Activated CD4-positive, alpha-beta T cell treated with anti-CD3 and anti-CD28 coated beads, Interleukin-2, amount 10 ng/mL, durations not matched to agents 24 days and 14 days (primary cell): ENCODE measurements at regions of chr1 and their contacts with region 1.

Region 1: GRCh38 chr1:108199781-108200570 is at the start of gene SLC25A24:
- DNase-seq: peak; percentile 96
- H3K4me3 Mint-ChIP-seq: peak within 1 kb of the TSS; percentile 90
- H3K27ac Mint-ChIP-seq: peak within 1 kb of the TSS; percentile 83
- H3K4me1 Mint-ChIP-seq: peaks cover 27% of the 10 kb centered on the region
- H3K27me3 Mint-ChIP-seq: peaks cover 13% of the 10 kb centered on the region
- total RNA-seq, gene SLC25A24: 16.9 and 18.4 TPM in 2 replicates

Region 2: DNA sequence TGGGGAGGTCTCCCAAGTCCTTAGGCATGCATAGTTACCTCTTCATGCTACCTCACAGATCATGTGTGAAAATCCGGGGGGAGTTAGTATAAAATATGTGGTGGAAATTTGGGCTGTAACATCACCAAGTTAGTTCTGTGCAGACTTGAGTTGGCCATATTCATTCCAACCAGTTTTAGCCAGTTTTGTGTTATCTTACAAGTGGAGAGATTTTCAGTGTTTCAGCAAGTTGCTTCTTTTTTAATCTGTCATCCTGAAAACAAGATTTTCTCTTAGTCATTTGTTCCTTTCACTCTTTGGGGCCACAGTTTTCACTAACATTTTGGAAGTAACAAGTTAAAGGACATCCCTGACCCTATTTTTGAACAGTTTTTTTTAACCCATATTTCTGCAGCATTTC is 11.2 kb before region 1 on chr1:
- intact Hi-C with region 1: loop called (anchors 1 kb)
- DNase-seq: no peak
- H3K4me3 Mint-ChIP-seq: peak overlapping the region; percentile 10
- H3K27ac Mint-ChIP-seq: peak overlapping the region; percentile 59
- H3K4me1 Mint-ChIP-seq: peaks cover 8% of the 10 kb centered on the region
- H3K27me3 Mint-ChIP-seq: no peaks in the 10 kb centered on the region